SK-N-SH (cell line): ENCODE measurements at regions of chr1 and their contacts with region 1.

Region 1: GRCh38 chr1:202235856-202236837 is 42.5 kb downstream of the LGR6 start:
- DNase-seq: peak; percentile 87
- H3K4me3 ChIP-seq: peak overlapping the region; percentile 15 to 40; a peak in 2 of 4 replicates
- H3K27ac ChIP-seq: peak overlapping the region in 1 of 2 experiments; percentile 93; a peak in 2 of 4 replicates
- H3K4me1 ChIP-seq: peaks cover 12% of the 10 kb centered on the region in 2 experiments; a peak in 2 of 4 replicates
- H3K27me3 ChIP-seq: no peaks in the 10 kb centered on the region
- CTCF ChIP-seq: peak; percentile 93
- EP300 ChIP-seq: peak in 1 of 2 experiments; percentile 87; a peak in 1 of 4 replicates
- RAD21 ChIP-seq: peak; percentile 50

Region 2: GRCh38 chr1:202213361-202214088 is 22.6 kb before region 1 on chr1:
- CTCF ChIA-PET with region 1: interaction called, 19 read pairs
- POLR2A ChIA-PET with region 1: no interaction called
- DNase-seq: peak; percentile 75
- H3K4me3 ChIP-seq: peak overlapping the region in 1 of 2 experiments; percentile 35; a peak in 2 of 4 replicates
- H3K27ac ChIP-seq: no peak overlapping the region
- H3K4me1 ChIP-seq: peaks cover 0 to 3% of the 10 kb centered on the region in 2 experiments; a peak in 1 of 4 replicates
- H3K27me3 ChIP-seq: peaks cover 66% of the 10 kb centered on the region
- CTCF ChIP-seq: peak; percentile 43
- EP300 ChIP-seq: no peak
- RAD21 ChIP-seq: peak; percentile 38

Region 3: DNA sequence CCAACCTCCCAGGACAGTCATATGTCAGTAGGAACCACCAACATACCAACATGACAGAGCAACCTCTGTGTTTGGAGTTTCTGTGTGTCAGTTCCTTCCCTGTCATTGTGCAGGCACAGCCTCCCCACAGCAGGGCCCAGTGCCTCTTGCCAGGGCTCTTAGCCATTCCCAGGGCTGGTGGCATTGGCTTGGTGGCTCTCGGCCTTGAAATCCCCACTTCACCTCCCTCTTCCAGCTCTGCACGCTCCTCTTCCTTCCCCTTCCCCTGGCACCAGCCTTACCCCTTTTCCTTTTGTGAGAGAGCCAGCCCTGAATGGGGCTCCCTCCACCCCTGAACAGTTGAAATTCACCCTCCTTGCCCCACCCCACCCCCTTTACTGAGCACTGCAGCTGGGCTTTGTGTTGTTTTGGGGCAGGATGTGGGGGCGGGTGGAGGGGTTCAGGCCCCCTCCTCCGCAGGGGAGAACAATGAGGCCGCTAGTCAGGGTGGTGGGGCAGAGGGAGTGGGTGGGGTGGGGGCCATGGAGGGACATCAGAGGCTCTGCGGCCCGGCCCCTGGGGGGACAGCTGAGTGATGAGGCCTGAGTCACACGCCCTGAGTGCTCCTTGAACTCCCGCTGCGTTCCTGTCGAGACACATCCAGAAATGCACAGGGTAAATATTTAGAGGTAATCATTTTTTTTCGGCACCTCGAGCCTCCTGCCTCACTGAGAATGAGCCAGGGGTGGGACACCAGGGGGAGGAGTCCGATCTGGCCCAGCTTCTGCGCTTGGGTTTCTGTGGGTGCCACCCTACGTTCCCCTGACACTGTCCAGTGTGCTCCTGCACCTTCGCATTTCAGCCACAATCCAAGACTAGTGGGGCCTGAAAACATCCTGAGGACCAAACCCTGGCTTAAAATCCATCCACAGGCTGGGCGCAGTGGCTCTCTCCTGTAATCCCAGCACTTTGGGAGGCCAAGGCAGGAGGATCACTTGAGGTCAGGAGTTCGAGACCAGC is 13.9 kb before region 1 on chr1:
- CTCF ChIA-PET with region 1: interaction called, 32 read pairs
- POLR2A ChIA-PET with region 1: no interaction called
- DNase-seq: no peak
- H3K4me3 ChIP-seq: no peak overlapping the region
- H3K27ac ChIP-seq: no peak overlapping the region
- H3K4me1 ChIP-seq: no peaks in the 10 kb centered on the region
- H3K27me3 ChIP-seq: peaks cover 36% of the 10 kb centered on the region
- CTCF ChIP-seq: no peak
- EP300 ChIP-seq: no peak
- RAD21 ChIP-seq: no peak

Region 4: DNA sequence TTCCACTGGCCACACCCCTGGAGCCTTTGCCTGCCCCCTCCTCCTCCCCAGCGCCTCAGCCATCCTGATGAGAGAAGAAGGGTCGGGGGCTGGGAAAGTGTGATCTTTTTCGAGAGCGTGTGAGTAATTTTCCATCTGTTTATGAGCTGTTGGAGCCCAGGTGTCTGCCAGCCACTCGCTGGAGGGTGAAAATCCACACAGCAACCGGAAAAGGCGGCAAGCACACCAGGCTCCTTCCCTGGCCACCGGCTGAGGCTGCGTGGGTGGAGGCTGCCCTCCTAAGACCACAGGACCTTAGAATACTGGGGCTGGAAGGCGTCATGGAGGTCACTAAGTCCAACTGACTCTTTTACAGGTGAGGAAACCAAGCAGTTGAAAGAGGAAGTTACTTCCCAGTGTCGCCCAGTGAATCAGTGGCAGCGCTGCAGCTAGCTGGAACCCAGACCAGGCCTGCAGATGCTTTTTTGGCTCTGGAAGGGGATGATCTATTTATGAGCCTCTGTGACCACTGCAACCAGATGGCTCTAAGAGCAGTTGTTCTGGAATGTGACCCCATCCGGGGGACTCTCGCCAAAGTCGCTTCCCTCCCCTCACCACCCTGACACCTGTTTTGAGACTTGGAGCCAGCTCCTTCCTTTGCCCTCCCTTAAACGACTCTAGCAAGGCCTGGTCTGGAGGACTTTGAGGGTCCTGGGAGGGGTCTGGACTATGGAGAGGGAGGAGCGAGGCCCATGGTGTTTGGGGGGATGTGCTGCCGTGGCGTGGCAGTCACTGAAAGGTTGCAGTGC is 11.9 kb after region 1 on chr1:
- CTCF ChIA-PET with region 1: interaction called, 17 read pairs
- POLR2A ChIA-PET with region 1: no interaction called
- DNase-seq: no peak
- H3K4me3 ChIP-seq: no peak overlapping the region
- H3K27ac ChIP-seq: no peak overlapping the region
- H3K4me1 ChIP-seq: peaks cover 0 to 6% of the 10 kb centered on the region in 2 experiments; a peak in 1 of 4 replicates
- H3K27me3 ChIP-seq: peaks cover 13% of the 10 kb centered on the region
- CTCF ChIP-seq: no peak
- EP300 ChIP-seq: no peak
- RAD21 ChIP-seq: no peak